ENCODE measurements at regions of chr2 and their contacts with region 1.

Region 1: DNA sequence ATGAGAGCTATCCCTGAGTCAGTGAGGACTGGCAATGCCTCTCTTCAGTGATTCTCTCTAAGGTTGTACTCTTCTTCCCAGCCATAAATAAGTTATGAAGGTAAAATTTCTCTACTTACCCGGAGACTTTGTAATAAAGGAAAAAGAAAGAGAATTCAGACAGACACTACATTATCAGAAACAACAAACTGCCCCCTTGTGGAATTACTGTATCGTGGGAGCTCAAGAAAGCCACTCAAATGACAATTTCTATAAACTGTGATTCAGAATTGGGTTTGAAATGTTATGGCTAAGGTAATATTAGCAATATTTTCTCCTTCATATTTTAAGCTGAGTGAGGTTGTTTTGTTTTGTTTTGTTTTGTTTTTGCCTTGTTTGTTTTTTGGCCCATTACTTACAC is 155.8 kb upstream of the TANK start:
- DNase-seq: no peak
- H3K4me3 ChIP-seq: no peak overlapping the region
- H3K27me3 ChIP-seq: no peaks in the 10 kb centered on the region
- CTCF ChIP-seq: peak; percentile 54

Region 2: DNA sequence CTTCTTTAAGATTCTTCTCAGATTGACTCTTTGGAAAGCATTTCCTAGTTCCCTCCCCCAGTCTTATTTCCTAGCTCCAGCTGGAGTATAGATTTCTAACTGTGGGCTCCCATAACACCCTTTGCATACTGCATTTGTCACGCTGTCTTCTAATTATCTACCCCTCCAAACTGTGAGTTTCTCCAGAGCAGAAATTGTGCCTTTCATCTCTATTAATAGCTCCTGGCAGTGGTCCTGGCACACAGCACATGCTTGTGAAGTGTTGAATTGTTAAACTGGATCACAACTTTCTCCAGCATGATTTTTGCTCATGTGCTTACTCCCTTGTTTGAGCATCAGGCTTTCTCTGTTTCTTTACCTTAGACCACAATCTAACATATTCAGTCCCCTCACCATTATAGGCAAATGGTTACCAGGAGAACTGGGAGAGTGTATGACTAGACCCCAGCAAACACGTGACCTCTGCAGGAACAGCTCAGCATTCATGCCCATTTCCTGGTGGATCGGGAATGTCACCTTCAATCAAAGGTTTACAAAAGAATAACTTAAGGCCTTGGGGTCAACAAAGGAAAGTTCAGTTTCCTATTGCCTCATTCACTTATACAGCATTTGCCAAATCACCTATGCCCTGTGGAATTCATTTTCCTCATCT is 19.8 kb before region 1 on chr2:
- CTCF ChIA-PET with region 1: no interaction called
- POLR2A ChIA-PET with region 1: no interaction called
- DNase-seq: no peak
- H3K4me3 ChIP-seq: no peak overlapping the region
- H3K27me3 ChIP-seq: no peaks in the 10 kb centered on the region
- CTCF ChIP-seq: no peak

Region 3: GRCh38 chr2:161019311-161019710 is 14.9 kb after region 1 on chr2:
- CTCF ChIA-PET with region 1: interaction called, 12 read pairs
- POLR2A ChIA-PET with region 1: no interaction called
- DNase-seq: no peak
- H3K4me3 ChIP-seq: no peak overlapping the region
- H3K27me3 ChIP-seq: no peaks in the 10 kb centered on the region
- CTCF ChIP-seq: no peak

Region 4: GRCh38 chr2:161077367-161078210 is 73.2 kb after region 1 on chr2:
- CTCF ChIA-PET with region 1: no interaction called
- POLR2A ChIA-PET with region 1: no interaction called
- DNase-seq: no peak
- H3K4me3 ChIP-seq: no peak overlapping the region
- H3K27me3 ChIP-seq: no peaks in the 10 kb centered on the region
- CTCF ChIP-seq: no peak